WTC11 (cell line): ENCODE measurements at regions of chr2 and their contacts with region 1.

Region 1: DNA sequence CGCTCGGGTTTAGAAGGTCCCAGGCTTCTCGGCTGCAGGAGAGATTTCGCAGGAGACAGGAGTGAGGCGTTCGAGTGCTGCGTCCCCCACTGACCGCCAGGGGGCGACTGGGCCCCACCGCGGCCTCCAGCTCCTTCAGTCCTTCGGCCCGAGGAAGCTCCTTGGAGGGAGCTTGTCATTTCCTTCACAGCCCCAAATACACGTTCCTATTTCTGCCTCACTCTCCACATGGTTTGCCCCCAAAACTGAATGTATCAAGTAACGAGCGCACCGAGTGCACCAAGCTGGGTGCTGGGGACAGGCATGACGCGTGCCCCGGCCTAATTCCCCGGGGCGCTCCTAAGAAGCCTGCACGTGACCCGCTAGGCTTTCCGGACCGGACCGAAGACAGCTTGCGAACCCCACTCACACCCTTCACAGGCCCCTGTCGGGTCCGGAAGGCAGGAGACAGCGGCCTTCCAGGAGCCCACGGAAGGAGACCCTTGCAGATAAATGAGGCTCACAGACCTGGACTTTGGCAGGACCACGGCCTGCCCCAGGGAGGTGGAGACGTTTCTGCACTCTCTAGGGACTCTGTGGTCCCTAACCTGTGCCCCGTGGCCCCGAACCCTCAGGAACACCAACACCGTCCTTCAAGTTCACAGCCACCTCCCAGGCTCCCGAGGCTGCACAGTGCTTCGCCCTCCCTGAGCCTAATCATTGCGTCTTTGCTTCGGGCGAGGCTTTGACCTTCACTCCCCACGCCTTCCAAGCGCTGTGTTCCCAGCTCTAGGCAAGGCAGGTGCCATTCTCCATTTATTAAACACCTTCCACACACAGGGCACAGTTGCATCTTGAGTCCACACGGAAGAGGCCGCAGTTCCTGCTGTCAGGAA is 13.0 kb upstream of the FAHD2A start:
- DNase-seq: peak; percentile 86
- ATAC-seq: peak; percentile 86
- H3K4me3 Mint-ChIP-seq: no peak overlapping the region
- H3K27ac Mint-ChIP-seq: no peak overlapping the region
- H3K4me1 Mint-ChIP-seq: no peaks in the 10 kb centered on the region
- H3K27me3 Mint-ChIP-seq: peaks cover 18% of the 10 kb centered on the region
- CTCF ChIP-seq: peak; percentile 96

Region 2: DNA sequence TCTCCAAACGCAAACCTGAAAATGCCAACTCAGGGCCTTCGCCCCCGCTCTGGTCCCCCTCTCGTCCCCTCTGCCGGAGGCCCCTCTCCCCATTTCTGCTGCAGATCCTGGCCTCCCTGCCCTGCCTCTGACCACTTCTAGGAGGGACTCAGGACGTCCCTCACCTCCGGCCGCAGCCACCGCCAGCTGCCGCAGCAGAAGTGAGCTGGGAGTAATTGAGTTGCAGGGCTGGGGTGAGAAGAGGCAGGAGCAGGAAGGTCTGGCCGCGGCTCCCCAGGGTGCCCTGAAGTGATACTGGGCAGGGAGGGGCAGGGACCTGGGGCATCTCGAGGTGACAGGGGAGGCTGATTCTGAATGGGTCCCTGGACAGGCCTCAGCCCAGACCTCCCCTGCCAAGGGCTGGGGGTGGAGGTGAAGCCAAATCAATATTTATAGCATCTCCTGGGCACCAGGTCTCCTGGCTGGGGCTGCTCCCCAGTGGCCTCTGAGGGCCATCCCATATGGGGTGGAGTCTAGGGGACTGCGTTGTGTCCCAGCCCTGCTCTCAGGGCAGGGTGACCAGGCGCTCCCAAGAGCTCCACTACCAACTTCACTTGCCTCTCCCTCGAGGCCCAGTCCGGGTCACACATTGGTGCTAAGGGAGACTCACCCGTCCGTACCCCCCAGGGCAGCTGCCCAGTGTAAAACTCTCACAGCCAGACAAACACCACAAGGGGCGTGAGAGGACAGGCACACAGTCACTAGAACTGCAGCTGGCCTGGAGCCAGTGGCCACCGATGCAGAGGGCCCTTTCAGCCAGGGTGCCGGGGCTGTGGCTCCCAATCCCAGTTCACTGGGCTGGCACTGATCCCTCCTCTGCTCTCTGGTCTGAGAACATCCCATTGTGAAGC is 59.3 kb before region 1 on chr2:
- CTCF ChIA-PET with region 1: interaction called, 13 read pairs
- POLR2A ChIA-PET with region 1: no interaction called
- DNase-seq: no peak
- ATAC-seq: peak; percentile 23; the same call in 1 of the 2 replicates
- H3K4me3 Mint-ChIP-seq: no peak overlapping the region
- H3K27ac Mint-ChIP-seq: peak overlapping the region; percentile 10; the same call in 1 of the 2 replicates
- H3K4me1 Mint-ChIP-seq: 0 out of 2 replicates have a peak, but pooled peaks cover 2% of the 10 kb centered on the region
- H3K27me3 Mint-ChIP-seq: no peaks in the 10 kb centered on the region; the same call in 1 of the 2 replicates
- CTCF ChIP-seq: no peak

Region 3: GRCh38 chr2:95345566-95346230 is 43.8 kb before region 1 on chr2:
- CTCF ChIA-PET with region 1: interaction called, 47 read pairs
- POLR2A ChIA-PET with region 1: no interaction called
- DNase-seq: peak; percentile 89
- ATAC-seq: peak; percentile 85
- H3K4me3 Mint-ChIP-seq: peak overlapping the region; percentile 73
- H3K27ac Mint-ChIP-seq: no peak overlapping the region
- H3K4me1 Mint-ChIP-seq: no peaks in the 10 kb centered on the region
- H3K27me3 Mint-ChIP-seq: peaks cover 67% of the 10 kb centered on the region
- CTCF ChIP-seq: peak; percentile 79

Region 4: DNA sequence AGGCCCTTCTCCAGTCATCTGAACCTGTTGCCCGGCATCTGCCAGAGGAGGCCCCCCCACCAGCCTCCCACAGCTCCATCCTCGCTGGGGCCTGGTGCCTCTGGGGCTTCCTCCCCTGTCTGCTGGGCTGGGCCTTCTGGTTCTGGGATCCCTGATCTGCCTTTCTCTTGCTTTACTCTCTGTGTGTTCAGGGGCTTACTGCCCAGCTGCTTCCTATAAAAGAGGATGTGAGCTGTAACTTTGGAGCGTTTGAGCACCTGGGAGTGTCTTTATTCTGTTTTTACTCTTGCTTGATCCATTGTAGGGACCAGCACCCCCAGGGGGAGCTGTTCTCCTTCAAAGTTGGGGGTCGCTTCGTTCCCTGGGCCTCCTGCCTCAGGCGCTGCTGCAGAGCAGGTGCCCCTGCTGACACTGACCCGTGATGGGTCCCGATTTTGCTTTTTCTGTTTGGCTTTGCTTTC is 10.1 kb before region 1 on chr2:
- CTCF ChIA-PET with region 1: interaction called, 88 read pairs
- POLR2A ChIA-PET with region 1: no interaction called
- DNase-seq: peak; percentile 66
- ATAC-seq: peak; percentile 84
- H3K4me3 Mint-ChIP-seq: no peak overlapping the region
- H3K27ac Mint-ChIP-seq: no peak overlapping the region
- H3K4me1 Mint-ChIP-seq: peaks cover 11% of the 10 kb centered on the region
- H3K27me3 Mint-ChIP-seq: no peaks in the 10 kb centered on the region
- CTCF ChIP-seq: 0 out of 2 replicates have a peak, but pooled peaks have one; percentile 33

Region 5: DNA sequence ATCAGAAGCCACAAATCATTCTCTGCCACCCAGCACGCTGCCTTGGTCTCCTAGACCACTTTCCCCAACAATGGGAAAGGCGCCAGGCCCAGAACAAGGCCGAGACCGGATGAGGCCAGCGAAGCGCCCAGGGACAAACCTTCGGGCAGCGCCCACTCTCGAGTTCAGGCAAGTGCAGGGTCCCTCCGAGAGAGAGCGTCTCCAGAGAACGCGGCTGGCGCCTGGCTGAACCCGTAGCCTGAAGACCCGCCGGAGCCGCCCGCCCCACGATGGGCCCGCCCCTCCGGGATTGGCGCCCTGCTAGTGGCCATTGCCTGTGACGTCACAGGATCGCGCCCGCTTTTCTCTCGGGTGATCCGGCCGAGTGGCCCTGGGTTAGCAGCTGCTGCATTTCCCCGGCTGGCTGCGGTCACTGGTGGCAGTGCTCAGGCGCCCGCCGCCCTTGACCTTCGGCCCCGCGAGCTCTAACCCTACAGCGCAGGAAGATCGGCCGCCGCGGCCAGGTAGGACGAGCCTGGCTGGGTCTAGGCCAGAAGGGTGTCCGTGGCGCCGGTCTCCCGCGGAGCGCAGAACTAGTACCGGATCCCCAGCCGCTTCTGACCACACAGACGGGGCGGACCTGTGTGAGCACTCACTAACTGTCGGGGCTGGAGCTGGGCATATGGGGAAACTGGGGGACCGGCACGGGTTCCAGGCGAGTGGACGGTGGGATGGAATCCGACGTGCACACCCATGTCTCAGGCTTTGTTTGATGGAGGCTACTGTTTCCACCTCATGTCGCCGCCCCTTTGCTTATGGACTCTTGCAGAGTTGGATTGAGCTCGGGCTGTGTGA is 13.1 kb after region 1 on chr2 and contains the start of gene FAHD2A:
- CTCF ChIA-PET with region 1: interaction called, 58 read pairs
- POLR2A ChIA-PET with region 1: no interaction called
- DNase-seq: peak; percentile 97
- ATAC-seq: peak; percentile 92
- H3K4me3 Mint-ChIP-seq: peak within 1 kb of the TSS; percentile 98
- H3K27ac Mint-ChIP-seq: peak within 1 kb of the TSS; percentile 96
- H3K4me1 Mint-ChIP-seq: peaks cover 13% of the 10 kb centered on the region
- H3K27me3 Mint-ChIP-seq: peaks cover 19% of the 10 kb centered on the region
- CTCF ChIP-seq: no peak
- total RNA-seq, gene FAHD2A: 39.8 to 47.9 TPM (median 45.4 TPM) in 3 replicates

Region 6: GRCh38 chr2:95728878-95729596 is 339.6 kb after region 1 on chr2:
- CTCF ChIA-PET with region 1: interaction called, 17 read pairs
- POLR2A ChIA-PET with region 1: no interaction called
- DNase-seq: peak; percentile 63
- ATAC-seq: peak; percentile 95
- H3K4me3 Mint-ChIP-seq: no peak overlapping the region
- H3K27ac Mint-ChIP-seq: no peak overlapping the region
- H3K4me1 Mint-ChIP-seq: peaks cover 3% of the 10 kb centered on the region; the same call in 1 of the 2 replicates
- H3K27me3 Mint-ChIP-seq: peaks cover 2% of the 10 kb centered on the region; the same call in 1 of the 2 replicates
- CTCF ChIP-seq: peak; percentile 49; the same call in 1 of the 2 replicates